ENCODE measurements at regions of chr1 and their contacts with region 1.

Region 1: GRCh38 chr1:21520899-21521716 is 11.9 kb downstream of the ALPL start:
- DNase-seq: no peak

Region 2: DNA sequence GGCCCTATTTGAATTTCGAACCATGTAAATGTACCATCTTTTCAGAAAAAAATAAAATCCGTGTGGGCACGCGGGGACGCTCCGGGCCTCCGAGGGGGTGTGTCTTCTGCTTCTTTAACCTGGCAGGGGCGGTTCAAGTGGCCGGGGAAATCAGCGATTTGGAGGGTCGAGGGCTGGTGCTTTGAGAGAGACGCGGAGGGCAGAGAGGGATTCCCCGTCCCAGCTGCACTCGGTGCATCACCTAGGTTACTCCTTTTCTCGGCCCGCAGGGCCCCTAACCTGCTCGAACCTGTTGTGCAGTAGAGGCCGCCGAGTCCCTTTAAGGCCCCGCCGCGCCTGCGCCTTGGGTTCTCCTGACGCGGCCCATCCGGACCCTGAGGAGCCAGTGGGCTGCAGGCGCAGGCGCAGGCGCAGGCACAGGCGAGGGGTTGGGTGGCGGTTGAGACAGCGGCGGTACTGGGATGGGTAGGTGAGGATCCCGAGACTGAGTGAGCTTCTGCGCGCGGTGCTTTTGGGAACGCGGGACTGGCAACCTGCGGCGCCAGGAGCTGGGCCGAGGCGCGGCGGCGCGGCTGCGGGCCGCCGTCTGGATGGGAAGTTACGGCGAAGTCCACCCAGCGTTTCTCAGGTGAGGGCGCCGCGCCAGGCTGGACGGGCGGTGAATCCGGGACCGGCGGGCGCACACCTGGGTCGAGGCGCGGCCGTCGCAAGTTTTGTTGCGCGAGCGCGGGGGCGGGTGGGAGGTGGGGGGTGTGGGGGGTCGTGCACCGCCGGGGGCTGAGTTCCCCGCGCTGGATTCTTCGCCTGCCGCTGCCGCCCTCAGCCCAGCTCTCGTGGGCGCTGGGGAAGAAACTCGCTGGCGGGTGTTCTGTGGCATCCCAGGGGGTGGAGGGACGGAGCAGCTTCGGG is 81.1 kb before region 1 on chr1 and contains the start of gene NBPF3:
- intact Hi-C with region 1: no loop called
- DNase-seq: peak; percentile 97
- total RNA-seq, gene NBPF3: 5.2 to 6.8 TPM

Region 3: DNA sequence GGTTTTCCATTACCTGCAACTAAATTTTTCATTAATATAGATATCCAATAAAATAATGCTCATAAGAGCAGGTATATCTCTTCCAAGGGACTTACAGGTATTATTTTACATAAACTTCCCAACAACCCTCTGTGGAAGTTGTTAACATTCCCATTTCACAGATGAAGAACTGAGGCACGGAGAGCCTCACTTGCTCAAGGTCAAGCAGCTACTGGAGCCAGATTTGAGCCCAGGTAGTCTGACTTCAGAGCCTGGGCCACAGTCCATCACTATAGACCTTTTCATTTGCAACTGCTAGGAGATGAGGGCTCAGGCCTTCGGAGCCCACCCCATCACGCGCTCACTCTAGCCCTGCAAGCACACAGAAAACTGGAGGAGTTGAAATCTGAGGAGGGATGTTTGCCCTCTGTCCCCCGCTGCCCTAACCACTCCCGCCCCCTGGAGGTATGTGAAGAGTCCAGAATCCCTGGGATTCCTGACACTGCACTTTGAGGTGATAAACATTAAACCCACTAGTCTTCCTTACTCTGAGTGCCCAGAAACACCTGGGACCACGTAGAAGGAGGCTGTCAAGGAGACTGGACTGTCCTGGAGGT is 23.5 kb before region 1 on chr1:
- intact Hi-C with region 1: no loop called
- DNase-seq: no peak

Region 4: GRCh38 chr1:21564521-21565095 is 43.5 kb after region 1 on chr1:
- intact Hi-C with region 1: no loop called
- DNase-seq: no peak

Region 5: GRCh38 chr1:21659099-21659923 is 138.2 kb after region 1 on chr1:
- intact Hi-C with region 1: loop called in 1 of 2 experiments (anchors 10 kb)
- DNase-seq: peak; percentile 94

Region 6: GRCh38 chr1:21909787-21910503 is 388.8 kb after region 1 on chr1:
- intact Hi-C with region 1: no loop called
- DNase-seq: peak; percentile 92

Measured in posterior vena cava (tissue), 2 donors.